Activated CD4-positive, alpha-beta T cell treated with anti-CD3 and anti-CD28 coated beads, Interleukin-2, amount 10 ng/mL, durations not matched to agents 7 days and 5 days (primary cell): ENCODE measurements at regions of chr5 and their contacts with region 1.

Region 1: DNA sequence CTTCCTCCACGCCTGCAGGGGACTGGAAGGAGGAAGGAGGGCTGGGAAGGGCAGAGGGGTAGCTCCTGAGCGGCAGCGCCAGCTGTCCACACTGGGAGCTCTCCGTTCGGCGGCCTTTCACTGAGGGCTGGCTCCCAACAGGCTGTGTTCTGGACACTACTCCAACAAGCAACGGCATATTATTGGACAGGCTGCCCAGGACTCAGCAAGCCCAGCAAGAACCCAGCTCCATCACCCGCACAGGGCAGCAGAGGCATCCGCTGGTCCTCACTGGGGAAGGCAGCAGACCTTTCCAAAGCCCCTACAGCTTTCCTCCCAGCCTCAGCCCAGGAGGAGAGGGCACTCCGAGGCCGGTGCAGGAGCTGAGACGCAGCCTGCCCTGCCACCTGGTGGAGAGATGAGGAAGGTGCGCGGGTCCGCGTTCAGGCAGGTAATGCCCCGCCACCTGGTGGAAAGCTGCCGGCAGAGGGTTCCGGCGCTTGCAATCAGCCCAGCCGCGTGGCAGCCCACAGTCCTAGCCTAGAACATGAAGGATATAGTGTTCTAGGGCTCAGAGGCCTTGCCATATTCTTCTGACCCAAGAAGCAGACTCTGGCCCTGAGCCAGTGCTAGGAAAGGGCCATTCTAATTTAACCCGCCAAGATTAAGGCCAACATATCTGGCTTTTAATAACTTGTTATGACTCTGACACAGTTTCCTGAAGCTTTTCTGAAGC is 74.4 kb downstream of the NRG2 start:
- DNase-seq: peak; percentile 90
- H3K4me3 Mint-ChIP-seq: no peak overlapping the region
- H3K27ac Mint-ChIP-seq: no peak overlapping the region
- H3K4me1 Mint-ChIP-seq: peaks cover 4% of the 10 kb centered on the region
- H3K27me3 Mint-ChIP-seq: peaks cover 25% of the 10 kb centered on the region

Region 2: DNA sequence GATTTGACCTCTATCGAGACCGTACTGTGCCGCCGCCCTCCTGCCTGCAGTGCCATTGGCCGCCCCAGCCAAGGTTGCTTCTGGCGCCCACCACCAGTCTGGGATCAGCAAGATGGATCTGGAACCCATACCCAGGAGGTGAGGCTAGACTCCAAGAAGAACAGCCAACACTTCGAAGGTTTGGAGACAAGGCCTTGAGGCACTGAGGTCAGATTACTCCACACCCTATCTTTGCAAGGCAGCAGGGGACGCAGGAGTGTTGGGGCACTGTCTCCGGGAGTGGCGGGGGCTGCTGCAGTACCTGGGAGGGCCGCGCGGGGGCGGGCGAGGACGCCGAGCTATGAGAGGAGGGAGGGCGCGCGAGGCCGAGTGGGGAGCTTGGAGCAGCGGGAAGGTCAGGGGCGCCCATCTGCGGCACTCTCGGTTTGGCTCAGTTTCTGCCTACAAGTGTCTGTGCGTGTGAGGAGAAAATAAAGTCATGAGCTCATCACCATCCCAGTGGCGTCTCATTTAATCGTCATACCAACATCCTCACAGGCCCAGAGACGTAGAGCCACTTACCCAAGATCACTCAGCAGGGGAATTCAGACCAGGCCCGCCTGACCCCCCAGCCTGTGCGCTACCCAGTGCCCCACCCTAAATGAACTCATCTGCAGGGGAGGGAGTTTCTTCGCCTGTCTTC is 193.6 kb before region 1 on chr5:
- CTCF ChIA-PET with region 1: interaction called, 20 read pairs
- POLR2A ChIA-PET with region 1: no interaction called
- DNase-seq: peak; percentile 74
- H3K4me3 Mint-ChIP-seq: no peak overlapping the region
- H3K27ac Mint-ChIP-seq: no peak overlapping the region
- H3K4me1 Mint-ChIP-seq: peaks cover 7% of the 10 kb centered on the region
- H3K27me3 Mint-ChIP-seq: peaks cover 18% of the 10 kb centered on the region

Region 3: DNA sequence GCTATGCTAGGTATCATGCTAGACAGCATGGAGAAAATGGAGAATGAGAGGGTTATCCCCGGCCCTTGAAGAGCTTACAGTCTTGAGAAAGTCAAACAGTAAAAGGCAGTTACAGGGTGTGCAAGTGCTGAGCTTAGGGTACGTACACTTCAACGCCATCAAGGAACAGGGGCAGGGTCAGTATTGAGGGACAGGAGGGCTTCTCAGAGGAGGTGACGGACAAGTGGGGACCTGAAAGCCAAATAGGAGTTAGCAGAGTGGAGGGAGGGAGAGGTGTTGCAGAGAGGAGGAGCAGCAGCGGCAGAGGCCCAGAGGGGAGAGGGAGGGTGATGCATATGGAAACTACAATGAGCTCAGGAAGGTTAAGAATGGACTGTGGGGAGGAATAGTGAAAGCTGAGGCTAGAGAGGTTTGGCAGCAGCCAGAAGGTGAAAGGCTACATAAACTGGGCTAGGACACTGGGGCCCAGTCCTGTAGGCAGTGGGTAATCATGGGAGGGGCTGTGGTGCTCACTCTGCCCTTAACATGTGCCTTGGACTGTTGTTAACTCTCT is 13.6 kb before region 1 on chr5:
- CTCF ChIA-PET with region 1: interaction called, 25 read pairs
- POLR2A ChIA-PET with region 1: no interaction called
- DNase-seq: no peak
- H3K4me3 Mint-ChIP-seq: no peak overlapping the region
- H3K27ac Mint-ChIP-seq: no peak overlapping the region
- H3K4me1 Mint-ChIP-seq: no peaks in the 10 kb centered on the region
- H3K27me3 Mint-ChIP-seq: peaks cover 4% of the 10 kb centered on the region

Region 4: GRCh38 chr5:139982157-139982974 is 13.7 kb after region 1 on chr5:
- CTCF ChIA-PET with region 1: interaction called, 30 read pairs
- POLR2A ChIA-PET with region 1: no interaction called
- DNase-seq: no peak
- H3K4me3 Mint-ChIP-seq: no peak overlapping the region
- H3K27ac Mint-ChIP-seq: no peak overlapping the region
- H3K4me1 Mint-ChIP-seq: no peaks in the 10 kb centered on the region
- H3K27me3 Mint-ChIP-seq: peaks cover 35% of the 10 kb centered on the region